ENCODE measurements at regions of chr2 and their contacts with region 1.

Region 1: DNA sequence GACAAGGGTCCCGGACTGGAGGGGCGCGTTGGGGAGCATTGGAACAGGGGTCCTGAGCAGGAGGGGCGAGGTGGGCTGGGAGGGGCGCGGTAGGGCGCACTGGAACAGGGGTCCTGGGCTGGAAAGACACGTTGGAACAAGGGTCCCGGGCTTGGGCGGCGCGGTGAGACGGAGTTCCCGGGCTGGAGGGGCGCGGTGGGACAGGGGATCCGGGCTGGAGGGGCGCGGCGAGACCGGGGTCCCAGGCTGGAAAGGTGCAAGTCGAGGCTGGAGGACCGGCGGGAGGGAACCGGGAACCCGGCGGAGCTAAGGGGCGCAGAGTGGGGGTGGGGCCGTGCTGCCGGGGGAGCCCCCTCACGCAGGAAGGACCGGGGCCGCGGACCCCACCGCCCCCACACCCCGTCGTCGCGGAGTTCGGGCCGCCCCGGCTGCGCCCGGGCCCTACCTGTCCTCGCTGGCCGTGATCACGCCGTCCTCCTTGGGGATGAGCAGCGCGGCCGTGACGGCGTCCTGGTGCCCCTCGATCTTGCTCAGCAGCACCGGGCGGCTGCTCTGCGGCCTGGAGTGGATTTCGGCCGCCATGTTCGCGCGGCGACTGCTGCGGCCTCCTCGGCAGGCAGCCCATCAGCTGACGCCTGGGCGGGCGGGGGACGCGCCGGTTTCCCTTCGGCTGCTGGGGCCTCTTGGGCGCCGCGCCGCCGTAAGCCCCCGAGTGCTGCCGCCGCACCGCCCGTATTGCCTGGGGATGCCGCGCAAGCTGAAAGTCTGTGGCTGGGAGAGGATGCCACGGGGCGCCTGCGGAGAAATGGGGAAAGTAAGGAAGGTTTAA is at the start of gene WDFY1:
- DNase-seq: peak; percentile 96
- total RNA-seq, gene WDFY1: 43.3 to 44.1 TPM

Region 2: GRCh38 chr2:223008162-223008561 is 936.8 kb before region 1 on chr2:
- intact Hi-C with region 1: loop called in 1 of 2 experiments (anchors 5 kb)
- DNase-seq: no peak

Region 3: DNA sequence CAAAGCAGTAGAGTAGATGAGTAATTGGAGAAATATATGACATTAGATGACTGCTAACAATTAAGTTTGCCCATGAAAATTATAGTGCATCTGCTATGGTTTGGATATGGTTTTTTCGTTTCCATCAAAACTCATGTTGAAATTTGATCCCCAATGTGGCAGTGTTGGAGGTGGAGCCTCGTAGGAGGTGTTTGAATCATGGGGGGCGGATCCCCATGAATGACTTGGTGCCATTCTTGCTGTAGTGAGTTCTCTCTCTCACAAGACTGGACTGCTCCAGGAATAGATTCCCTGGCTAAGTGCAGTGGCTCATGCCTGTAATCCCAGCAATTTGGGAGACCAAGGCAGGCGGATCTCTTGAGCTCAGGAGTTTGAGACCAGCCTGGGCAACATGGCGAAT is 649.9 kb after region 1 on chr2:
- intact Hi-C with region 1: no loop called
- DNase-seq: no peak

Measured in posterior vena cava (tissue), 2 donors.